Tibial artery (tissue), 4 donors: ENCODE measurements at regions of chr7 and their contacts with region 1.

Region 1: GRCh38 chr7:18458830-18459229 is 36.7 kb upstream of the HDAC9 start:
- DNase-seq: no peak
- H3K4me3 ChIP-seq: no peak overlapping the region
- H3K27ac ChIP-seq: no peak overlapping the region
- H3K4me1 ChIP-seq: peaks cover 0 to 16% (median 3%) of the 10 kb centered on the region in 4 donors
- H3K27me3 ChIP-seq: no peaks in the 10 kb centered on the region
- CTCF ChIP-seq: no peak

Region 2: DNA sequence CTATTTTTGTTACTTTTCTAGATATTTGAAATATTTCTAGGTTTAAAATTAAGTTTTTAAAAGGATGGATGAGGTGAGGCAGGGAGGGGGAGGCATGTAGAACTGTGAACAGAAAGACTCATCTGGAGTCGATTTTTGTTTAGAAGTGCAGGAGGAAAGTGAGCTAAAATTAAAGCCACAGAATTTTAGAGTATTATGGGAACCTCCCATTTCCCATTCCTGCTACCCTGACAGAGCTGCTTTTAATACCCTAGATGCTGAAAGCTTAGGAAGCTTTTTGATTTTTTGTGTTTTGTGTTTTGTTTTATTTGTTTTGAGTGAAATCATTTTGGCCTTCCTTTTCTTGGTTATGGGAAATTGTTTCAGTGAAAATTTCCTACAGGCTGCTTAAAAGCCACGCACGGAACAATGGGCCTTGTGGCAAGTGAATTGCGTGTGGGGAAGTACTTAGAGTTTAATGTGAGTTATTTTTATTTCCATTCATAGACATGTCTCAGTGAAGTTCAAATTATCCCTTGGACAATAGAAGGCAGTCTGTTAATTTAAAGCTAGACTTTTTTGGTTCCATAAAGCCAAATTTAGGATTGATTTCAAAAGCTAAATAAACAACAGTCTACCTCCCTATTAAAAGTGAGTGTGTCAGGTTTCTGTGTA is 65.2 kb before region 1 on chr7:
- intact Hi-C with region 1: loop called (anchors 10 kb)
- DNase-seq: no peak
- H3K4me3 ChIP-seq: no peak overlapping the region
- H3K27ac ChIP-seq: no peak overlapping the region
- H3K4me1 ChIP-seq: peaks cover 0 to 26% (median 14%) of the 10 kb centered on the region in 4 donors
- H3K27me3 ChIP-seq: no peaks in the 10 kb centered on the region
- CTCF ChIP-seq: no peak